Activated CD8-positive, alpha-beta T cell treated with anti-CD3 and anti-CD28 coated beads, Interleukin-2, amount 10 ng/mL, durations not matched to agents 7 days and 5 days (primary cell): ENCODE measurements at regions of chr5 and their contacts with region 1.

Region 1: DNA sequence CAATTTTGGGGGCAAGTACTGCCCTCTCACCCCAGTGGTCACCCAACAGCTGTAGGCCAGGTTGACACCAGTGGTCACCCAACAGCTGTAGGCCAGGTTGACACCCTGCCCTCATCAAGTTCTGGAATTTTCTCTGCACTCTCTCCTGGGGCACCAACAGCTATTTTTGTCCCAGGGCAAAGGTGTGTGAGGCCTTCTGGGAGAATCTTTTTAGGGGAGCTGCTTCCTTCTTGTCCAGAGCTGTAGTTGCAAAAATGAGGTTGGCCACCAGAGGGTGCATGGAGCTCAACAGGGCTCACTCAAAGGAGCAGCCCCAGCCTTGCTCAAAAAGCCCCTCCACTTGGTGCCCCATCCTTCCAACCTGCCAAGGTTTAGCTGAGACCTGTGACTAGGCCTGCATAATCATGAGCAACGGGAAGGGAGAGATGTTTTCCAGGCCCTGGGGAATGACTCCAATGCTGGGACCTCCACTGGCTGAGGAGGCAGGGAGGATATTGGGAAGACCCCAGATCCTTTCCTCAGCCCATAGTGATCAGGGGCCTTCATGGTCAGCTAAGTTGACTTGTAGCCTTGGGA is 10.6 kb upstream of the P4HA2 start:
- DNase-seq: peak; percentile 87
- ATAC-seq: peak; percentile 90
- H3K4me3 Mint-ChIP-seq: no peak overlapping the region
- H3K27ac Mint-ChIP-seq: no peak overlapping the region
- H3K4me1 Mint-ChIP-seq: peaks cover 2% of the 10 kb centered on the region
- H3K27me3 Mint-ChIP-seq: peaks cover 2% of the 10 kb centered on the region

Region 2: DNA sequence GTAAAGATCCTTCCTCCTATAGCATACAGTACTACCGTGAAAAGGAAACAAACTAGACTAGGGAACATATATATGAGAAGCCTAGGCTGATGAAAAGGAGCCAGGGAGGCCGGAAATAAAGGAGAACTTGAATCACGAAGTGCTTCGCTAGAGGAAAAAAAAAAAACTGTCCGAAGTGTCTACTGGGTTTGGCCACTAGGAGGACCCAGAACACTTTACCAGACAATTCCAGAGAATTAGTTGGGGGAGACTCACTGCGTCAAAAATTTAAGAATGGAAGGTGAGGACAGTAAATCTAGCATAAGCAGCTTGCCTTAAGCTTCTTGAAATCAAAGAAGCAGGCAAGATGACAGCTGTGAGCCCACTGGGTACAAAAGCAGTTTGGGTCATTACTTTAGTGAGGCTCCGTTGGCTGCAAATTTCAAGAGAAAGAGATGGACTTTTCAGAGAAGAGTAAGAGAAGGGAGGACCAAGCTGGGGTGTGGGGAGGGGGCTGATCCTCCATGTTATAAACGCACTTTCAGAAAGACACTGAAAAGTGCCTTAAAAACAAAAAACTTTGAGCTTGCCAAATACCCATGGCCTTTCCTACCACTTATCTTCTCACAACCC is 58.0 kb before region 1 on chr5:
- CTCF ChIA-PET with region 1: interaction called, 25 read pairs
- POLR2A ChIA-PET with region 1: no interaction called
- DNase-seq: peak; percentile 35
- ATAC-seq: peak; percentile 37
- H3K4me3 Mint-ChIP-seq: no peak overlapping the region
- H3K27ac Mint-ChIP-seq: no peak overlapping the region
- H3K4me1 Mint-ChIP-seq: peaks cover 47% of the 10 kb centered on the region
- H3K27me3 Mint-ChIP-seq: no peaks in the 10 kb centered on the region

Region 3: DNA sequence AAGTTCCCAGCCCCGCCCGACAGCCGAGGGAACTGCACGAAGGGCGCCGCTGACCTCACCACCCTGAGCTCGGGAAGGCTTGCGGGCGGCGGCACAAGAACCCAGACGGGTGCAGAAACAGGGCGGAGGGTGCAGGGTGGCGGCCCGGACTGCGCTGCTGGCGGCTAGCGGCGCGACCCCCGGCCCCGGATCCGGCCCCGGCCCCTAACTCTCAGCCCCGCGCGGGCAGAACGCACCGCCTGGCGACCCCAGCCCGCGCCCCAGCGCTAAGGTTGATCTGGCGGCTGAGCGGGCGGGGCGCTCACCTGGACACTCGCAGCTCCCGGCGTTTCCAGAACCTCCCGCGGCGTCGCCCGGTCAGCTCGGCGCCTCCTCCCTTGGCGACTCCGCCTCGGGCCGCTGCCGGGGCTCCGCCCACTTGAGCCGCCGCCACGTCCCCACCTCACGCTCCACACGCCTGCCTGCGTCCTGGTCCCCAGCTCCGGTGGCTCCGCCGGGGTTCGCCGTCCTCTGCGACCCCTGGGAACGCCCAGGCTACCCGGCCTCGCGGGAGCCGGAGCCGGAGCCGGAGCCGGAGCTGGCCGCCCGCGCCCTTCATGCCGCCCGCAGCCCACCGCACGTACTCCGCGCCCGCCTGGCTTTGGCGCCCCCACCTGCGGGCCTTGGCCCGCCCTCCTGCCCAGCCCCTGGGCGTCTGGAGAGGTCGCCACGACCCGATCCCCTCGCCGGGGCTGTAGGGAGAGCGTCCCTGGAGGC is 10.6 kb before region 1 on chr5 and contains the start of gene P4HA2:
- CTCF ChIA-PET with region 1: interaction called, 31 read pairs
- POLR2A ChIA-PET with region 1: no interaction called
- DNase-seq: peak; percentile 62
- ATAC-seq: peak; percentile 93
- H3K4me3 Mint-ChIP-seq: peak within 1 kb of the TSS; percentile 47
- H3K27ac Mint-ChIP-seq: no peak within 1 kb of the TSS
- H3K4me1 Mint-ChIP-seq: peaks cover 36% of the 10 kb centered on the region
- H3K27me3 Mint-ChIP-seq: peaks cover 19% of the 10 kb centered on the region
- total RNA-seq, gene P4HA2: 11.4 to 13.5 TPM

Region 4: DNA sequence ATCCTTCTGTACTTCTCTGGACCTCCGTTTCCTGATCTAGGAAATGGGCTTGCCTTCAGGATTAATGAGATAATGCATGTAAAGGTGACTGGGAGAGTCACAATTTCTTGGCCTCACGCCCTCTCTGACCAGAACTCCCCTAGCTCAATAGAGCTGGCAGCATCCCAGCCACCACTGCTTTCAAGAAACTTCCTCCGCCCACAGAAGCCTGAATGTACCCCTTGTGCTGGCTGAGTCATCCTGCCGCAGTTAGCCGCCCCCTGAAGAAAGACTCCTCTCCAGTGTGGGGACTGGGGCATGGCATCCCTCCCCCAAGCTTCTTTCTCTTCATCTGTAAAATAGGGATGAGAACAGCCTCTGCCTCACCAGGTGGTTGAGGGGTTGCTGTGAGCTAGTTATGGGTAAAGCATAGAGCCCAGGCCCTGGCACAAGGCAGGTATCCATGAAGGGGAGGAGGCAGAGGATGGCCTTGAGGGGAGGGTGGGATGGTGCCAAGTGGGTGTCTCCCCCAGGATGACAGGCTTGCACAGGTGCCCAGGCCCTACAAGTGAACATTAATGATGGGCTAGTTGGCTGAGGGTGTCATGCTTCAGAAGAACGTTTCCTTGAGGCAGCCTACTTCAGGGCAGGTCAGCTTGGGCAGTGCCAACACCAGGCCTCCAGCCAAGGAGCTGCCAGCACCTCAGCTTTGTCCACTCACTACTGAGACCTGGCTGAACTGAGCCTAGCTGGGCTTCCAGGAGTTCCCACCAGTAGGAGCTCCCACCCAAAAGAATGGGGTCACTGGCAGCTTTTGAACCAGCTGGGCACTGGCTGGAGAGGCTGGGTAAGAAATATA is 22.7 kb after region 1 on chr5:
- CTCF ChIA-PET with region 1: interaction called, 11 read pairs
- POLR2A ChIA-PET with region 1: no interaction called
- DNase-seq: no peak
- ATAC-seq: no peak
- H3K4me3 Mint-ChIP-seq: no peak overlapping the region
- H3K27ac Mint-ChIP-seq: no peak overlapping the region
- H3K4me1 Mint-ChIP-seq: peaks cover 9% of the 10 kb centered on the region
- H3K27me3 Mint-ChIP-seq: peaks cover 14% of the 10 kb centered on the region

Region 5: DNA sequence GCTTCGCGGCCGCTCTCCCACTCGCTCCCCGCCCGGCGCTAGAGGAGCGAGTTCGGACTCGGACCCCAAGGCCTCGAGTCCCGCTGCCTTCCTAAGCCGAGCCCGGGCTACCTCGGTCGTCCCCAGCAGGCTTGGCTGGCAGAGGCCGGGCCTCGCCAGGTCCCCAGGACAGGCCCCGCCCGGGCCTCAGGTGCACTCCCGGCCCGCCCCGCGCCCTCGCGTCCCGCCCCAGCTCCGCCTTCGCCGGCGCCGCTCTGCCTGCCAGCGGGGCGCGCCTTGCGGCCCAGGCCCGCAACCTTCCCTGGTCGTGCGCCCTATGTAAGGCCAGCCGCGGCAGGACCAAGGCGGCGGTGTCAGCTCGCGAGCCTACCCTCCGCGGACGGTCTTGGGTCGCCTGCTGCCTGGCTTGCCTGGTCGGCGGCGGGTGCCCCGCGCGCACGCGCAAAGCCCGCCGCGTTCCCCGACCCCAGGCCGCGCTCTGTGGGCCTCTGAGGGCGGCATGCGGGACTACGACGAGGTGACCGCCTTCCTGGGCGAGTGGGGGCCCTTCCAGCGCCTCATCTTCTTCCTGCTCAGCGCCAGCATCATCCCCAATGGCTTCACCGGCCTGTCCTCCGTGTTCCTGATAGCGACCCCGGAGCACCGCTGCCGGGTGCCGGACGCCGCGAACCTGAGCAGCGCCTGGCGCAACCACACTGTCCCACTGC is 131.4 kb after region 1 on chr5 and contains the start of gene SLC22A5:
- CTCF ChIA-PET with region 1: interaction called, 12 read pairs
- POLR2A ChIA-PET with region 1: no interaction called
- DNase-seq: peak; percentile 72
- ATAC-seq: peak; percentile 97
- H3K4me3 Mint-ChIP-seq: peak within 1 kb of the TSS; percentile 73
- H3K27ac Mint-ChIP-seq: peak within 1 kb of the TSS; percentile 73
- H3K4me1 Mint-ChIP-seq: peaks cover 21% of the 10 kb centered on the region
- H3K27me3 Mint-ChIP-seq: no peaks in the 10 kb centered on the region
- total RNA-seq, gene SLC22A5: 2.2 to 3.5 TPM

Region 6: GRCh38 chr5:133199417-133200178 is 961.3 kb after region 1 on chr5:
- CTCF ChIA-PET with region 1: no interaction called
- POLR2A ChIA-PET with region 1: no interaction called
- DNase-seq: no peak
- ATAC-seq: no peak
- H3K4me3 Mint-ChIP-seq: no peak overlapping the region
- H3K27ac Mint-ChIP-seq: no peak overlapping the region
- H3K4me1 Mint-ChIP-seq: no peaks in the 10 kb centered on the region
- H3K27me3 Mint-ChIP-seq: no peaks in the 10 kb centered on the region